Naive thymus-derived CD4-positive, alpha-beta T cell (primary cell): ENCODE measurements at regions of chr2 and their contacts with region 1.

Region 1: GRCh38 chr2:127701193-127701650 is at the start of gene SFT2D3:
- DNase-seq: peak; percentile 84 to 92 (median 89)
- ATAC-seq: peak; percentile 83
- H3K4me3 ChIP-seq: peak within 1 kb of the TSS; percentile 75
- H3K4me3 Mint-ChIP-seq: peak within 1 kb of the TSS; percentile 88 to 96 (median 94)
- H3K27ac ChIP-seq: peak within 1 kb of the TSS; percentile 83
- H3K27ac Mint-ChIP-seq: peak within 1 kb of the TSS; percentile 96 to 99 (median 98)
- H3K4me1 ChIP-seq: peaks cover 21 to 29% of the 10 kb centered on the region in 2 donors
- H3K4me1 Mint-ChIP-seq: peaks cover 18 to 52% (median 46%) of the 10 kb centered on the region in 7 donors
- H3K27me3 ChIP-seq: no peaks in the 10 kb centered on the region
- H3K27me3 Mint-ChIP-seq: peaks cover 0 to under 1% (median 0%) of the 10 kb centered on the region in 5 donors
- total RNA-seq, gene SFT2D3: 6.0 to 17.8 (median 8.9) TPM

Region 2: DNA sequence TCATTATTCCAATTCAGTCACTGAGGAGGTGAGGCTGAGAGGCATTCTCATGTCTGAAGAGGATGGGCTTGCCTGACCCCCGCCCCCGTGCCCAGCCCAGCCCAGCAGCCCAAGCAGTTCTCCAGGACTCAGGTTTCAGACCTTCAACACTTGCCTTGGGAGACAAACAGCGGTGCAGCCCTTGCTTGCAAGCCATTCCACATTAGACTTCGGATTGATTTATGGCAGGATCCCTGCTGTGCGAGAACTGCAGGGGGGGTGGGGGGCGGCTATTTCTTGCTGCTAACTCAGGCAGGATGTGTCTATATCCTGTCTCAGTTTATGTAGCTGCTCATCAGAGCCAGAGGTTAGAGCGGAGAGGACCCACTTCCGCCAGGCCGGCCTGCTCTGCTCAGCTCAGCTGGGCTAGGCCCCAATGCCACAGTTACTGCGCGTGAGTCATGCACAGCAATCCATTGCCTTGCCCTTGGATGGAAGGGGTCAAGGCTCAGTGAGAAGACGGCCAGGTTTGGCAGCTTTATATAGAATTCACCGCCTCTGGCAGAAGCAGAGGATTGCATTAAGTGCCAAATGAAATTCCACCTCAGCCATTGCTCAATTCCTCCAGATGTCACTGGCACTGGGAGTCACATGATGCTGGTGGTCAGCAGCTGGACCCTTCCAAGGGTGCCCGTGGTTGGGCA is 1043.4 kb before region 1 on chr2:
- CTCF ChIA-PET with region 1: no interaction called
- POLR2A ChIA-PET with region 1: no interaction called
- intact Hi-C with region 1: loop called (anchors 5 to 10 kb)
- DNase-seq: peak; percentile 40 to 79 (median 73)
- ATAC-seq: peak; percentile 72
- H3K4me3 ChIP-seq: peak overlapping the region; percentile 99
- H3K4me3 Mint-ChIP-seq: peak overlapping the region; percentile 88 to 100 (median 96)
- H3K27ac ChIP-seq: peak overlapping the region; percentile 98
- H3K27ac Mint-ChIP-seq: peak overlapping the region; percentile 93 to 100 (median 98)
- H3K4me1 ChIP-seq: peaks cover 41 to 59% of the 10 kb centered on the region in 2 donors
- H3K4me1 Mint-ChIP-seq: peaks cover 50 to 78% (median 63%) of the 10 kb centered on the region in 7 donors
- H3K27me3 ChIP-seq: no peaks in the 10 kb centered on the region
- H3K27me3 Mint-ChIP-seq: no peaks in the 10 kb centered on the region

Region 3: DNA sequence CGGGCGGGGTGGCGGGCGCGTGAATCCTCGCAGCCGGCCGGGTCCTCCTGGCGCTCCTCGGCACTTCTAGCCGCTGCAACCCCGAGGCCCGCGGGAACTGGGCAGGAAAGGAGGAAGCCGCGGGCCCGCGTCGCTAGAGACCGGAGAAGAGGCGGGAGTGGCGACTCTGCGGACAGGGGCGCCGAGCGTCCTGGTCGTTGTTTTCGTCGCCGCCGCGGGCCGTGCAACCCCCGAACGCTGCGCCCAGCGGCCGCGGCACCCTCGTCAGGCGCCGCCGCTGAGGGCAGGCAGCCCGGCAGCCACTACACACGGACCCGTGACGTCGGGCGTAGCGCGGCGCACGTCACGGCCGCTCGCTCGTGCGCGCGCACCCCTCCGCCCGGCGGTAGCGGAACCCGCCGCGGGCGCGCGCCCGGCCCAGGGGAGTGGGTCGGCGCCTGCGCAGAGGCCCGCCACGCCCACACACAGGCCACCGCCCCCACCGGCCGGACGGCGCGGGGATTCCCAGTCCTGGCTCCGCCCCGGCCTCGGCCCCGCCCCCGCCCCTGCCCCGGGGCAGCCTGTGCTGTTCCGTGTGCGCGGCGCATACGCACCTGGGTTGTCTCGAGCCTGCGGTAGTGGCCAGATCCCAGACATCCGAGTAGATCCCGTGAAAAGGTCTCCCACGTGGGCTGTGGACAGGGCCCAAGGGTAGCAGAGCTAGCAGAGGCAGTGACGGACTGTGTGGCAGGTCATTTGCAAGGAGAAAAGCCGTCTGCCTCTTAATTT is 313.4 kb before region 1 on chr2 and contains the start of gene MAP3K2:
- CTCF ChIA-PET with region 1: no interaction called
- POLR2A ChIA-PET with region 1: interaction called, 7 read pairs
- intact Hi-C with region 1: loop called (anchors 1 to 10 kb)
- DNase-seq: peak; percentile 89 to 97 (median 93)
- ATAC-seq: peak; percentile 88
- H3K4me3 ChIP-seq: peak within 1 kb of the TSS; percentile 78
- H3K4me3 Mint-ChIP-seq: peak within 1 kb of the TSS; percentile 87 to 97 (median 91)
- H3K27ac ChIP-seq: peak within 1 kb of the TSS; percentile 100
- H3K27ac Mint-ChIP-seq: peak within 1 kb of the TSS; percentile 95 to 99 (median 97)
- H3K4me1 ChIP-seq: peaks cover 23 to 30% of the 10 kb centered on the region in 2 donors
- H3K4me1 Mint-ChIP-seq: peaks cover 45 to 71% (median 67%) of the 10 kb centered on the region in 7 donors
- H3K27me3 ChIP-seq: no peaks in the 10 kb centered on the region
- H3K27me3 Mint-ChIP-seq: peaks cover 0 to 1% (median 0%) of the 10 kb centered on the region in 5 donors
- total RNA-seq, gene MAP3K2: 60.5 to 111 (median 84.5) TPM

Region 4: GRCh38 chr2:127640082-127641072 is 60.8 kb before region 1 on chr2:
- CTCF ChIA-PET with region 1: no interaction called
- POLR2A ChIA-PET with region 1: interaction called, 12 read pairs
- intact Hi-C with region 1: loop called (anchors 1 to 5 kb)
- DNase-seq: peak in 6 of 9 donors; percentile 30 to 38 (median 35)
- ATAC-seq: peak; percentile 2
- H3K4me3 ChIP-seq: peak overlapping the region; percentile 64
- H3K4me3 Mint-ChIP-seq: peak overlapping the region; percentile 53 to 85 (median 78)
- H3K27ac ChIP-seq: peak overlapping the region; percentile 78
- H3K27ac Mint-ChIP-seq: peak overlapping the region; percentile 80 to 96 (median 93)
- H3K4me1 ChIP-seq: peaks cover 3 to 77% of the 10 kb centered on the region in 2 donors
- H3K4me1 Mint-ChIP-seq: peaks cover 14 to 89% (median 66%) of the 10 kb centered on the region in 7 donors
- H3K27me3 ChIP-seq: no peaks in the 10 kb centered on the region
- H3K27me3 Mint-ChIP-seq: no peaks in the 10 kb centered on the region

Region 5: DNA sequence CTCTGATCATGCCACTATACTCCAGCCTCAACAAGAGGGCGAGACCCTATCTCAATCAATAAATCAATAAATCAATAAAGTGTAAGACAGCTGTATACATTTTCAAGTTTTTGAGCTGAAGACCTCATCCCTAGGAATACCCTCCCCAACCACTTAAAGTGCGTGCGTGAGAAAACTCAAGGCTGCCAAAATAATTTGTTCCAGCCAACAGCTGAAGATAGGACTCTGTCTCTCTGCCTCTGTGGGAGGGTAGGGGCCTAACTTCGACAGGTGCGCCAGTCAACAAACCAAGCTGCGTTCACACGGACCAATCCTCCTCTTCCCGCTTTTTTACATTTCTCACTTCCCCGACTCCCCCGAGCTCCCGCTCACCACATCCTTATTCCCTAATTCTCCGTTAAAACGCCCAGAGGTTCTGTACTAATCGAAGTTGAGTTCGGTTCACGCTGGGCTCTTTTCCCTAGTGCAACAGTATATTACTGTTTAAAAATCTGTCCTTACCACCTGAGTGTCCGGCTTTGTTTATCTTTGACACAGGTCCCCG is 156.1 kb after region 1 on chr2:
- CTCF ChIA-PET with region 1: no interaction called
- POLR2A ChIA-PET with region 1: interaction called, 6 read pairs
- intact Hi-C with region 1: loop called (anchors 1 to 5 kb)
- DNase-seq: no peak
- ATAC-seq: no peak
- H3K4me3 ChIP-seq: peak overlapping the region; percentile 98
- H3K4me3 Mint-ChIP-seq: peak overlapping the region; percentile 84 to 99 (median 94)
- H3K27ac ChIP-seq: peak overlapping the region; percentile 86
- H3K27ac Mint-ChIP-seq: peak overlapping the region; percentile 29 to 97 (median 90)
- H3K4me1 ChIP-seq: peaks cover 22 to 25% of the 10 kb centered on the region in 2 donors
- H3K4me1 Mint-ChIP-seq: peaks cover 22 to 68% (median 44%) of the 10 kb centered on the region in 7 donors
- H3K27me3 ChIP-seq: no peaks in the 10 kb centered on the region
- H3K27me3 Mint-ChIP-seq: no peaks in the 10 kb centered on the region

Region 6: DNA sequence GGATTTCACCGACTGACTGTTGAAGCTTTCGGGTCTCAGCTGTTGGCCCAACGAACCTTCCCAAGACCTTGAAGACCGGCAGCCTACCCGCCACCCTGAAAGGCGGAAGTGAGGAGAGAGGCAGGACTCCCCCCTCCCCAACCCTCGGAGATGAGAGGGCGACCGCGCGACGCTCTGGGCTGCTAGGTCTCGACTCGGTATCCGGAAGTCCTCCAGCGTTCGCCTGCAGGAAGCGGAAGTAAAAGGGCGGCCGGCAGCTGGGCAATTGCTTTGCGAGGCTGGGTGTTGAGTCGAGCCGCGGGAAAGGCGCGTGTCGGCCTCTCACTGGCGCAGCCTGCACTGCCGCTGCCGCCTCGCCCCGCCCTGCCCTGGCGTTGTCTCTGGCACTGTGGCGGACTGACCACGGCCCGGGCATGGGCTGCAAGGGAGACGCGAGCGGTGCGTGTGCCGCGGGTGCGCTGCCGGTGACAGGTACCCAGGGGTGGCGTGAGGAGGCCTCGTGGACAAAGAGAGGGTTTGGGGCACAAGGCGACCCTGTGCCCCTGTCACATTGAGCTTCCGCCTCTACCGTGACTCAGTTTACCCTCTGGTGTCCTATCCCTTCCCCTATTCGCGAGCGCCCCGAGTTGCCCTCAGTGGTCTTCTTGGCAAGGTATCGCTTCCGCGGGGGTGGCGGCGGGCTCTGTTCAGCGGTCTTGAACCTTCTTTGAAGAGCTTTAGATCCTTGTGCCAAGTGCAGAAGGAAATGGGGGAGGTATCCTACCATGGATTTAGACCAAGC is 389.9 kb after region 1 on chr2 and contains the start of gene UGGT1:
- CTCF ChIA-PET with region 1: no interaction called
- POLR2A ChIA-PET with region 1: interaction called, 12 read pairs
- intact Hi-C with region 1: loop called (anchors 2 to 10 kb)
- DNase-seq: peak; percentile 75 to 94 (median 92)
- ATAC-seq: peak; percentile 99
- H3K4me3 ChIP-seq: peak within 1 kb of the TSS; percentile 86
- H3K4me3 Mint-ChIP-seq: peak within 1 kb of the TSS; percentile 88 to 98 (median 94)
- H3K27ac ChIP-seq: peak within 1 kb of the TSS; percentile 75
- H3K27ac Mint-ChIP-seq: peak within 1 kb of the TSS; percentile 91 to 97 (median 94)
- H3K4me1 ChIP-seq: peaks cover 13 to 18% of the 10 kb centered on the region in 2 donors
- H3K4me1 Mint-ChIP-seq: peaks cover 27 to 60% (median 56%) of the 10 kb centered on the region in 7 donors
- H3K27me3 ChIP-seq: no peaks in the 10 kb centered on the region
- H3K27me3 Mint-ChIP-seq: no peaks in the 10 kb centered on the region
- total RNA-seq, gene UGGT1: 38.1 to 75.6 (median 46.6) TPM